ENCODE measurements at regions of chr18 and their contacts with region 1.

Region 1: GRCh38 chr18:5600378-5601071 is 56.7 kb upstream of the EPB41L3 start:
- DNase-seq: no peak
- ATAC-seq: no peak
- H3K4me3 ChIP-seq: no peak overlapping the region
- H3K27ac ChIP-seq: no peak overlapping the region
- H3K4me1 ChIP-seq: no peaks in the 10 kb centered on the region
- H3K27me3 ChIP-seq: no peaks in the 10 kb centered on the region; a peak in 1 of 4 replicates
- CTCF ChIP-seq: no peak; a peak in 1 of 6 replicates
- EP300 ChIP-seq: no peak
- POLR2A ChIP-seq: no peak
- RAD21 ChIP-seq: peak; percentile 43

Region 2: DNA sequence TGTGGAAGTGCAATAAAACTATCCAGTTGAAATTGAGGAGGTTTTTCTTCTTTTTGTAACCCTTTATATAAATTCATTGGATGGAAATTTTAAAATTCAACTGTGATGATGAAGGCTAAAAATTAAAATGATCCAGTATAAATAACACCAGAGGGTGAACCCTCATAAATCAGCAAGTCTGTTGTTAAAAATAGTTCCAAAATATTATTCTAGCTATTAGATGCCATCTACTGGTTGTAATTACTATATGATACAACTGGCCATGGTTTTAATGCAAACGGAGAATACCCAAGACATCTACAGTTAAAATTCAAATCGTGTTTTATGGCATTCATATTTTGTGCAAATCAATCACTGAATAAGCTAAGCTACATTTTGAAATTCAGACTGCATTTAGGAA is 241.0 kb after region 1 on chr18:
- CTCF ChIA-PET with region 1: no interaction called
- POLR2A ChIA-PET with region 1: no interaction called
- RAD21 ChIA-PET with region 1: no interaction called
- SMC1A ChIA-PET with region 1: no interaction called
- in situ Hi-C with region 1: no loop called
- intact Hi-C with region 1: loop called (anchors 10 kb)
- DNase-seq: no peak
- ATAC-seq: no peak
- H3K4me3 ChIP-seq: no peak overlapping the region
- H3K27ac ChIP-seq: no peak overlapping the region
- H3K4me1 ChIP-seq: no peaks in the 10 kb centered on the region
- H3K27me3 ChIP-seq: peaks cover 0 to 1% of the 10 kb centered on the region in 2 experiments; a peak in 1 of 4 replicates
- CTCF ChIP-seq: no peak
- EP300 ChIP-seq: no peak
- POLR2A ChIP-seq: no peak
- RAD21 ChIP-seq: no peak